A549 (cell line): ENCODE measurements at regions of chr19 and their contacts with region 1.

Region 1: GRCh38 chr19:47284324-47284899 is 9.7 kb downstream of the INAFM1 start:
- DNase-seq: peak; percentile 50 to 77
- ATAC-seq: peak; percentile 34 to 35; a peak in 3 of 6 replicates
- H3K4me3 ChIP-seq: no peak overlapping the region
- H3K27ac ChIP-seq: no peak overlapping the region
- H3K4me1 ChIP-seq: peaks cover 12% of the 10 kb centered on the region
- CTCF ChIP-seq: peak; percentile 92
- EP300 ChIP-seq: no peak
- POLR2A ChIP-seq: no peak
- RAD21 ChIP-seq: peak; percentile 71 to 78

Region 2: DNA sequence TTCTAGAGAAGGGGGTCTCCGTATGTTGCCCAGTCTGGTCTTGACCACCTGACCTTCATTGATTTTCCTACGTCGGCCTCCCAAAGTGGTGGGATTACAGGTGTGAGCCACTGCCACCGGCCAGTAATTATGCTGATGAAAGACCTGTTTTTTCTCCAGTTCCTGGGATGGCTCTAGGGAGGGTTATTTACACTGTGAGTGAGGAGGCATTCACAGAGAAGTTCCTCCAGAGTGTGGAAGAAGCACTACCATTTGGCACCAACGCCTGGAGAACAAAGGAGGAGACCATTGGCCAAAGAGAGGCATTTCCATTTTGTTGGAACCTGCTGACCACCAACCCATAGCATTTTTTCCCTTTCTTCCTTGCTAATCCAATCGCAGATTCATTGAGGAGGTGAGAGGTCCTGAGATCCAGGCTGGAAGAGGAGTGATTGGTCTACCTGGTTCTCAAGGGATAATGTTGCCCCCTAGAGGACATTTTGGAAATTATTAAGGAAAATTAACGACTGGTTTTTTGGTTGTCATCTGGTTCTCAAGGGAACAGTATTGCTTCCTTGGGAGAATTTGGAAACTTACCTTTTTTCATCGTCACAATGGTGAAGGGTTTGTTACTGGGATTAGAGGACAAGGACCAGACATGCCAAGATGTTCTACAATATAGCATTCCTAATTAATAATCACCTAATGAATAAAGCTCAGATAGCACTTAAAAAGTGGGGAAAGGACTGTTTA is 159.3 kb before region 1 on chr19:
- CTCF ChIA-PET with region 1: no interaction called
- POLR2A ChIA-PET with region 1: no interaction called
- DNase-seq: peak; percentile 86 to 90
- ATAC-seq: peak; percentile 84 to 85
- H3K4me3 ChIP-seq: no peak overlapping the region
- H3K27ac ChIP-seq: peak overlapping the region in 1 of 2 experiments; percentile 51; a peak in 3 of 6 replicates
- H3K4me1 ChIP-seq: peaks cover 33% of the 10 kb centered on the region
- CTCF ChIP-seq: peak; percentile 95
- EP300 ChIP-seq: no peak
- POLR2A ChIP-seq: no peak
- RAD21 ChIP-seq: peak; percentile 91 to 95

Region 3: GRCh38 chr19:47221080-47221841 is 63.2 kb before region 1 on chr19:
- CTCF ChIA-PET with region 1: no interaction called
- POLR2A ChIA-PET with region 1: no interaction called
- DNase-seq: no peak
- ATAC-seq: no peak
- H3K4me3 ChIP-seq: no peak overlapping the region
- H3K27ac ChIP-seq: no peak overlapping the region; a peak in 1 of 6 replicates
- H3K4me1 ChIP-seq: peaks cover 8% of the 10 kb centered on the region
- CTCF ChIP-seq: no peak
- EP300 ChIP-seq: no peak
- POLR2A ChIP-seq: no peak
- RAD21 ChIP-seq: no peak

Region 4: DNA sequence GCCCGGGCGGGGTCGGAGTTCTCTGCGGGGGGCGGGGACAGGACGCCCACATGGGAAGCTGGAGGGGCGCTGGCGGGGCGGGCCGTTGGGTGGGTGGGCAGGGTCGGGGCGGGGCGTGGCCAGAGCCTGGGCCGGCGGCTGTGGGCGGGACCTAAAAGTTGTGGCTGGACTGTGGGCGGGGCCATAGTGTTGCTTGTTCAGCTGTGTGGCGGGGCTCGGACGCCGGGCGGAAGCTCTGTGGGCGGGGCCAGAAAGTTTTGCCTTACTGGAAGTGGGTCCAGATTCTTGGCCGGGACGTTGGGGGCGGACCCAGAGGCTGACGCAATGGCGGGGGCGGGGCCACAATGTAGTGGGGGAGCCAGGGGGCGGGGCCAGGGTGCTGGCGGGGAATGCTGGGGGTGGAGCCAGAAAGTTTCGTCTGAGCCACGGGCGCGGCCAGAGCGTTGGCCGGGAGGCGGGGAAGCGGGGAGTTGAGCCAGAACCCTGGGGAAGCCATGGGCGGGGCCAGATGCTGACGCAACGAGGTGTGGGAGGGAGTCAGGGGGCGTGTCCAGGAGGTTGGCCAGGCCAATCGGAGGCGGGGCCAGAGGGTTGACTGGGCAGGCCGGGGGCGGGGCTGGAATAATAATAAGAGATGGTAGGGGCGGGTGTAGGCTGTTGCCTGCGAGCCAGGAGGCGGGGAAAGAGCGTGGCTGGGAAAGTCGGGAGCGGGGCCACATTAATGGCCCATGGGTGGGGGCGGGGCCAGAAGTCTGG is 27.5 kb before region 1 on chr19:
- CTCF ChIA-PET with region 1: interaction called, 10 read pairs
- POLR2A ChIA-PET with region 1: interaction called, 14 read pairs
- DNase-seq: peak; percentile 99 to 100
- ATAC-seq: peak; percentile 71 to 85
- H3K4me3 ChIP-seq: peak overlapping the region; percentile 61
- H3K27ac ChIP-seq: peak overlapping the region; percentile 91 to 92
- H3K4me1 ChIP-seq: peaks cover 30% of the 10 kb centered on the region
- CTCF ChIP-seq: no peak
- EP300 ChIP-seq: no peak
- POLR2A ChIP-seq: no peak
- RAD21 ChIP-seq: no peak

Region 5: DNA sequence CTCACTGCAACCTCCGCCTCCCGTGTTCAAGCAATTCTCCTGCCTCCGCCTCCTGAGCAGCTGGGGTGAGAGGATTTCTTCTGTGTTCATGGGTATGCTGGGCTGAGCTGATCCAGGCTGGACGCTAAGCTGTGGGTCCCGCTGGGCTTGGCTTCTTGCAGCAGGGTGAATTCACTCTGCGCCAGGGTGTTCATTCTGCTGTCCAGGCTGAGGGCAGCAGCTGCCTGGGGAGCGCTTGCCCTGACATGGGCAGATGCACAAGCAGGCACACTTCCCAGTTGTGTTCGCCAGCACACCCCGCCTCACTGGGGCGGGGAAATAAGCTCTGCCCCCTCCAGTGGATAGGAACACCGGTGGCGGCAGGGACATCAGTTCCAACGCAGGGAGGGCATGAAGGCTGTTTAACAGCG is 17.1 kb before region 1 on chr19:
- CTCF ChIA-PET with region 1: interaction called, 10 read pairs
- POLR2A ChIA-PET with region 1: no interaction called
- DNase-seq: no peak
- ATAC-seq: no peak
- H3K4me3 ChIP-seq: no peak overlapping the region
- H3K27ac ChIP-seq: no peak overlapping the region
- H3K4me1 ChIP-seq: peaks cover 2% of the 10 kb centered on the region; the same call in 1 of the 3 replicates
- CTCF ChIP-seq: no peak
- EP300 ChIP-seq: no peak
- POLR2A ChIP-seq: no peak
- RAD21 ChIP-seq: no peak

Region 6: GRCh38 chr19:47273313-47273977 is 11.0 kb before region 1 on chr19:
- CTCF ChIA-PET with region 1: interaction called, 48 read pairs
- POLR2A ChIA-PET with region 1: interaction called, 4 read pairs
- DNase-seq: peak; percentile 96
- ATAC-seq: peak; percentile 66 to 89
- H3K4me3 ChIP-seq: peak overlapping the region; percentile 59
- H3K27ac ChIP-seq: peak overlapping the region; percentile 80 to 90
- H3K4me1 ChIP-seq: peaks cover 15% of the 10 kb centered on the region
- CTCF ChIP-seq: no peak
- EP300 ChIP-seq: no peak
- POLR2A ChIP-seq: peak; percentile 41
- RAD21 ChIP-seq: no peak

Region 7: DNA sequence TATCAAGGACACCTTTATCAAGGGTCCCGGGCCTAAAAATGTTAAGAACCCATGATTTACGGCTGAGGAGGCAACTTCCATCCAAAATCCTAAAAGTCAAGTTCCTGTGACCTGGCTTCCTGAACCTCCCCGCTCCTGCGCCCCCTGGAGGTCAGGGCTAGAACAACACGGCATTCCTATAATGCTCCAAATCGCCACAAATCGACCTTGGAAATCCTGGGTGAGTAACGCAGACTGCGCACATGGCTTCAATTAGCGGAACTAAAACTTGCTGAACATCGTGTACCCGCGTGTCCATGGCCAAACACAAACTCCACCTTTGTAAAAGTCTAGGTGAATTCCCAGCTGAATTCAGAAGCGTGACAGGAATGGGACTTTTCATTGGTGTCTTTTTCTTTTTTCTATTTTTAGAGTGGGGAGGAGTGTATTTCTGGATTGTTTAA is 20.9 kb after region 1 on chr19:
- CTCF ChIA-PET with region 1: interaction called, 160 read pairs
- POLR2A ChIA-PET with region 1: no interaction called
- DNase-seq: peak; percentile 86 to 92
- ATAC-seq: peak; percentile 74 to 75
- H3K4me3 ChIP-seq: no peak overlapping the region
- H3K27ac ChIP-seq: peak overlapping the region; percentile 60 to 71
- H3K4me1 ChIP-seq: peaks cover 29% of the 10 kb centered on the region
- CTCF ChIP-seq: peak; percentile 99
- EP300 ChIP-seq: no peak
- POLR2A ChIP-seq: no peak
- RAD21 ChIP-seq: peak; percentile 58 to 62

Region 8: DNA sequence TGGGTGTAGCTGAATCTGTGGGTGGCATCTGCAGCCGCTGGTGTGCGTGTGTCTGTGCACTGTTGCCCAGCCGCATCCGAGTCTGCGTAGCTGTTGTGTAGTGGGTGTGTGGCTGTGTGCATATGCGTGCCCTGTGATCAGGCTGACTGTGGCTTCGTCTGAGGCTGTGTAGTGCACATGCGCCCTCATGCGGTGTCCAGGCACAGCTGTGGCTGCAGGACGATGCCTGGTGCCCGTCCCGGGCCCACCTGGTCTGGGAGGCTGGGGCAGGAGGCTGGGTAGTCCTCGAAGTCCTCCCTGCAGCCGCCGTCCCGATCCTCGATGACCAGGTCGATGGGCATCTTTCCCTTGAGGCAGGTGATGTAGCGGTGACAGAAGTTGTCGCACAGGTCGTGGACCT is 130.1 kb after region 1 on chr19:
- CTCF ChIA-PET with region 1: interaction called, 21 read pairs
- POLR2A ChIA-PET with region 1: no interaction called
- DNase-seq: peak in 1 of 2 experiments; percentile 82
- ATAC-seq: peak; percentile 68 to 81; a peak in 5 of 6 replicates
- H3K4me3 ChIP-seq: no peak overlapping the region
- H3K27ac ChIP-seq: no peak overlapping the region
- H3K4me1 ChIP-seq: peaks cover 17% of the 10 kb centered on the region
- CTCF ChIP-seq: peak; percentile 52
- EP300 ChIP-seq: no peak
- POLR2A ChIP-seq: no peak
- RAD21 ChIP-seq: peak; percentile 67 to 78

Region 9: DNA sequence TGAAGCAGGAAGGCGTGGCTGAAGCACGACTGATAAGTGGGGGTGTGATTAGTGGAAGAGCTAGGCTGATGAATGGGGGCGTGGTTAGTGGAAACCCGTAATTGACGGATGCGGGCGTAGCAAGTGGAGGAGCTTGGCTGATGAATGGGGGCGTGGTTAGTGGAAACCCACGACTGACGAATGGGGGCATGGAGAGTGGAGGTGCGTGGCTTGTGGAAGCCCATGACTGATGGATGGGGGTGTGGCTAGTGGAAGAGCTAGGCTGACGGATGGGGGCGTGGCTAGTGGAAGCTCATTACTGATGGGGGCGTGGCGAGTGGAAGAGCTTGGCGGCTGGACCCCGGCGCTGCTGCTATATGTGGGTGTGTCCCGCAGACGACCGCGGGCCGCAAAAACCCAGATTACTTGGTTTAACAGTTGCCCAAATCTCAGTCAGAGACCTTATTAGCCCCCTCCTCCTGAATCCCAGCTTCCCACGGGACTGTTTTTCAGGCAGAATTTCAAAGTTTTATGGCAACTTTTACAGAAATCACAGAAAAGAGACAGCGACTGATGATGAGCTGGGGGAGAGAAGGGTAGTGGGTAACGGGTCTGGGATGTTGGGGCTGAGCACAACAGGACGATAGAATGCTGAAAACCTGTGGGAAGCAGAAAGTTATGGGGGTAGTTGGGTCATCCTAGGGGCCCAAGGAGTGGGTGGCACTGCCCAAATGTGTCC is 143.9 kb after region 1 on chr19:
- CTCF ChIA-PET with region 1: interaction called, 13 read pairs
- POLR2A ChIA-PET with region 1: no interaction called
- DNase-seq: peak; percentile 95 to 98
- ATAC-seq: peak; percentile 75 to 85
- H3K4me3 ChIP-seq: peak overlapping the region; percentile 42
- H3K27ac ChIP-seq: peak overlapping the region in 1 of 2 experiments; percentile 43; a peak in 2 of 6 replicates
- H3K4me1 ChIP-seq: peaks cover 20% of the 10 kb centered on the region
- CTCF ChIP-seq: no peak
- EP300 ChIP-seq: no peak
- POLR2A ChIP-seq: no peak
- RAD21 ChIP-seq: no peak